ENCODE measurements at regions of chr2 and their contacts with region 1.

Region 1: GRCh38 chr2:27754138-27754588 is 17.4 kb upstream of the MRPL33 start:
- DNase-seq: peak; percentile 76
- H3K4me3 ChIP-seq: no peak overlapping the region
- H3K27ac ChIP-seq: peak overlapping the region; percentile 91
- H3K4me1 ChIP-seq: peaks cover 21% of the 10 kb centered on the region
- H3K27me3 ChIP-seq: no peaks in the 10 kb centered on the region
- CTCF ChIP-seq: peak; percentile 97 to 99

Region 2: DNA sequence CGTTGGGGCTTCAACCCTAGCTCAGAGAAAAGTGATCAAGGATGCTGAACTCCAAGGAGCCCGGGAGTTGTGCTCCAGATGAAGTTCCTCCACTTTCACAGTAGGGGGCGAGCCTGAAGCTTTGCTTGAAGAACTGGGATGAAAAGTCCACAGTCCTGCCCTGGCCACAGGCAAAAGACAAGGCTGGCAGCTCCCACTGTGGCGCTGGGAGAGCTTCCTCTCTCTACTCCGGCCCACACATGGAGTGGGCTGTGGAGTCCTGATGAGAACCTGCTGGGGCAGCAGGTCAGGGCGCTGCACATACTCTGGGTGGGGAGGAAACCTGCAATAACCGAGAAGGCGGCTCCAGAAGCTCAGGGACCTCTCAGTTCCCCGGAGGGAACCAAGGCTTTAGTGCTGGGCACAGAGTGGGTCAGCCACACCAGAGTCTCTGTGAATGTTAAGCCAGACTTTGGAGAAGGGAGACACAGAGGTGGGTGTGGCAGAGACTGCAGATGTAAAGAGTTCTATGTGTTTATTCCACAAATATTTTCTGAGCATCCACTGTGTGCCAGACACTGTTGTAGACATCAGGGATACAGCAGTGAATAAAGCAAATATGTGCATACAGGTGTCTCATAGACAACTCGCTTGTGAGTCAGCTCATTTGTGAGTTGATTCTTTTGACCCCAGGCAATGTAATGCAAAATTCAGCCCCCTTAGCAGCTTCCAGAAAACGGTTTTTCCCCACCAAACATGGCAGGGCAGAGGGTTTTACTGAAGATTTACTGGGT is 30.6 kb before region 1 on chr2:
- CTCF ChIA-PET with region 1: no interaction called
- dilution Hi-C with region 1: no loop called
- in situ Hi-C with region 1: no loop called
- intact Hi-C with region 1: loop called (anchors 1 kb)
- DNase-seq: peak; percentile 53
- H3K4me3 ChIP-seq: no peak overlapping the region
- H3K27ac ChIP-seq: no peak overlapping the region
- H3K4me1 ChIP-seq: peaks cover 32% of the 10 kb centered on the region
- H3K27me3 ChIP-seq: no peaks in the 10 kb centered on the region
- CTCF ChIP-seq: peak; percentile 78 to 89

Region 3: GRCh38 chr2:27798948-27799645 is 44.9 kb after region 1 on chr2:
- CTCF ChIA-PET with region 1: no interaction called
- dilution Hi-C with region 1: no loop called
- in situ Hi-C with region 1: no loop called
- intact Hi-C with region 1: loop called (anchors 2 kb)
- DNase-seq: peak; percentile 100
- H3K4me3 ChIP-seq: no peak overlapping the region
- H3K27ac ChIP-seq: peak overlapping the region; percentile 94
- H3K4me1 ChIP-seq: peaks cover 30% of the 10 kb centered on the region
- H3K27me3 ChIP-seq: no peaks in the 10 kb centered on the region
- CTCF ChIP-seq: no peak

Region 4: DNA sequence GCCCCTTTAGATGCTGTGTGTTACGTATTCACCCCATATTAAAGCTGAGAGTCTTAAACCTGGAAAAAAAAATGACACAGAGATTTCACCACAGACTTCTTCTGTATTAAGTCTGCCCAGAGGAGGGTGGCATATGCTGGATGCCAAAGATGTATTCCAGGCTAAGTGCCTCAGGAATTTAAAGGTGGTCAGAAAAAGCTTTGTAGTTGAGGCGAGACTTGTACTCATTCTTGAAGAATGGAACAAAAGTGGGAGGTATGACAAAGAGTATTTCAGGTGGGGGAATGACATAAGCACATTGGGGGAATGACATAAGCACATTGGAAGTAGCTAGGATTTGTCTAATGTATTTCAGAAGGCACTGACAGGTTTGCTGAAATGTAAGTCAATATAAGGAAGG is 235.0 kb after region 1 on chr2:
- CTCF ChIA-PET with region 1: no interaction called
- dilution Hi-C with region 1: no loop called
- in situ Hi-C with region 1: no loop called
- intact Hi-C with region 1: loop called (anchors 1 kb)
- DNase-seq: peak; percentile 97
- H3K4me3 ChIP-seq: no peak overlapping the region
- H3K27ac ChIP-seq: peak overlapping the region; percentile 87
- H3K4me1 ChIP-seq: peaks cover 41% of the 10 kb centered on the region
- H3K27me3 ChIP-seq: no peaks in the 10 kb centered on the region
- CTCF ChIP-seq: peak in 1 of 2 donors; percentile 6

Region 5: DNA sequence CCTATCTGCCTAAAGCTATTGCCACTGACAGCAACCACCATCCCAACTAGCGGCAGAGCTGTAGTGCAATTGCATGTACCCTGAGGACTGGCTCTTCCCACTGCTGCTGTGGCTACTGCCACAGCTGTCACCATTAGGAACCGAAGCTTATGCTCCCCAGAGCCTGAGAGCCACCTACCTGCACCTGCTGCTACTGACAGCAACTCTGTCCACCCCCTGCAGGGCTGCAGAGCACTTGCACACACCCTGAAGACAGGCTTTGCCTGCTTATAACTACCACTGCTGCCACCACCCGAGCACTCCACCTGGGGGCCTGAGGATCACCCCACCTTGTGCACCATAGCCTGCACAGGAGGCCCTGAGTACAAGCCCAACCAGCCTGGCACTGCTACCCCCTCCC is 420.9 kb after region 1 on chr2:
- CTCF ChIA-PET with region 1: no interaction called
- dilution Hi-C with region 1: no loop called
- in situ Hi-C with region 1: no loop called
- intact Hi-C with region 1: loop called (anchors 5 kb)
- DNase-seq: no peak
- H3K4me3 ChIP-seq: no peak overlapping the region
- H3K27ac ChIP-seq: no peak overlapping the region
- H3K4me1 ChIP-seq: peaks cover 25% of the 10 kb centered on the region
- H3K27me3 ChIP-seq: no peaks in the 10 kb centered on the region
- CTCF ChIP-seq: peak; percentile 19 to 28